Endothelial cell of umbilical vein (primary cell): ENCODE measurements at regions of chr20 and their contacts with region 1.

Region 1: DNA sequence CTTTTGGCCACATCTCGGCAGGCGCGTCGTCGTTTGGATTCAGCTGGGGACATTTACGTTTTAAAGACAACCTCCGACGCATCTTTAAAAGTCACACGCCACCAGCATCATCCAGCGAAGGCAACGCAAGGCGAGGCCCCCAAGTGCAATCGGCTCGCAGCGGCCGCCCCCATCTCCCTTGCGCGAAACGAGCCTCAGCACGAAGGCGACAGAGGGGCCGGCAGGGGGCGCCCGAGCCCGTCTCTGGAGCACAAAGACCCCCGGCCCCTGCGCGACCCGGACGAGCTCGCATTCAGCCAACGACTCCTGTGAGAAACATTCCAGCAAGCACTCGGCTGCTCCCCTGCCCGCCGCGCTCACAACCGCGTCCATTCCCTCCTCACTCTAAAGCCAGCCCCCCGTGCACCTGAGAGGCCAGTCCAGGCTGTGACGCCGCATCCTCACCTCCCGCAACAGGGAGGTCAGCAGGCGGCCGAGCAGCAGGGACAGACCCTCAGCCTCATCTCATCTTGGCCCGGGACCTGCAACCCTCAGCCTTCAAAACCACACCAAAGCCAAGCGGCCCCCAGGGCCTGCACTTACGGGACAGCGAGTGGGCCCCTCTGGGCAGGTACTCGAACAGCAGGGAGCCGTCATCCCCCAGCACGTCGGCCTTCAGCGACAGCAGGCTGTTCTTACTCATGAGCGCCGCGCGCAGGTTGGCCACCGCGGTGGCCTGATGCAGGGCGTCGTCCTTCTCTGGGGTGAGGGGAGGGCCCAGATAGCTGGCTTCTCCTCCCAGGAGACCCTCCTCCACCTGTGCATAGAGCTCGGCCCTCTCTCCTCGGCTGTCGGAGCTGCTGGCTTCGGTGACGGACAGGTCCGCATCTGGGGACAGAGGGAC is 35.8 kb downstream of the SLC2A4RG start:
- DNase-seq: peak; percentile 60
- H3K4me3 ChIP-seq: peak overlapping the region in 2 of 3 experiments; percentile 17 to 26
- H3K27ac ChIP-seq: no peak overlapping the region
- H3K4me1 ChIP-seq: peaks cover 6% of the 10 kb centered on the region
- H3K27me3 ChIP-seq: no peaks in the 10 kb centered on the region
- CTCF ChIP-seq: peak; percentile 86 to 94
- POLR2A ChIP-seq: no peak

Region 2: DNA sequence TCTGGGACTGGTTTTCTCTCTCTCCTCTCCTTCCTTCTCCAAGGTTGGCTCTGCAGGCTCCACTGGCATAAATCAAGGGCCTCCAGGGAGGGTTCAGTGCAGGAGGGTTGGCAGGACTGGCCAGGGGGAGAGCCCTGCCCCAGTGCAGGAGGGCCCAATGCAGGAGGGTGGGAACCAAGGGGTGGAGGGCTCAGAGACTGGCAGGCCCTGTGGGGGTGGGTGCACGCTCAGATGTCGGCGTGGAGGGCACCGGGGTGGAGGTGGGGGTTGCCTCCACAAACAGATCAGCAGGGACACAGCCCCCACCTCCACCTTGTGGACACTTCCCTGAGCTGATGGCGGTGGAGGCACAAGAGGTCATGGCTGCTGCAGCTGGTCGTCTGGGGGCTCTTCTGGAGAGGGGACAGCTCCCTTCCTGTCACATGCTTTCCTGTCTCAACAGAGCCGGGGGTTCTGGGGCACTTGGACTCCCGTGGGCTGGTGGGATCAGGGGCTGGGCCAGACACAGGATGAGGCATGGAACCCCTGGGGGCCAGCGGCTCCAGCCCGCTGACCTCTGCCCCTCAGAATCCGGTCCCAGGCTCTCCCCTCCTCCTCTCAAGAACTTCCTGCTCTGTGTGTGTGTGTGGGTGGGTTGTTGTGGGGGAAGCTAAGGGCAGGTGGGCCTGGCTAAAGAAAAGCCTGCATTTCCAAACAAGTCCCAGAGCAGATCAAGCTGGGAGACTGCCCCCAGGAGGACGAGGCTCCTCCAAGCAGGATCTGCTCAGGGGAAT is 83.2 kb after region 1 on chr20:
- CTCF ChIA-PET with region 1: interaction called, 24 read pairs
- POLR2A ChIA-PET with region 1: no interaction called
- dilution Hi-C with region 1: no loop called
- intact Hi-C with region 1: no loop called
- DNase-seq: peak; percentile 72
- H3K4me3 ChIP-seq: no peak overlapping the region
- H3K27ac ChIP-seq: no peak overlapping the region
- H3K4me1 ChIP-seq: peaks cover 25% of the 10 kb centered on the region
- H3K27me3 ChIP-seq: peaks cover 0 to 5% of the 10 kb centered on the region in 2 experiments
- CTCF ChIP-seq: peak; percentile 24 to 62
- POLR2A ChIP-seq: no peak